IMR-90 (cell line): ENCODE measurements at regions of chr14 and their contacts with region 1.

Region 1: DNA sequence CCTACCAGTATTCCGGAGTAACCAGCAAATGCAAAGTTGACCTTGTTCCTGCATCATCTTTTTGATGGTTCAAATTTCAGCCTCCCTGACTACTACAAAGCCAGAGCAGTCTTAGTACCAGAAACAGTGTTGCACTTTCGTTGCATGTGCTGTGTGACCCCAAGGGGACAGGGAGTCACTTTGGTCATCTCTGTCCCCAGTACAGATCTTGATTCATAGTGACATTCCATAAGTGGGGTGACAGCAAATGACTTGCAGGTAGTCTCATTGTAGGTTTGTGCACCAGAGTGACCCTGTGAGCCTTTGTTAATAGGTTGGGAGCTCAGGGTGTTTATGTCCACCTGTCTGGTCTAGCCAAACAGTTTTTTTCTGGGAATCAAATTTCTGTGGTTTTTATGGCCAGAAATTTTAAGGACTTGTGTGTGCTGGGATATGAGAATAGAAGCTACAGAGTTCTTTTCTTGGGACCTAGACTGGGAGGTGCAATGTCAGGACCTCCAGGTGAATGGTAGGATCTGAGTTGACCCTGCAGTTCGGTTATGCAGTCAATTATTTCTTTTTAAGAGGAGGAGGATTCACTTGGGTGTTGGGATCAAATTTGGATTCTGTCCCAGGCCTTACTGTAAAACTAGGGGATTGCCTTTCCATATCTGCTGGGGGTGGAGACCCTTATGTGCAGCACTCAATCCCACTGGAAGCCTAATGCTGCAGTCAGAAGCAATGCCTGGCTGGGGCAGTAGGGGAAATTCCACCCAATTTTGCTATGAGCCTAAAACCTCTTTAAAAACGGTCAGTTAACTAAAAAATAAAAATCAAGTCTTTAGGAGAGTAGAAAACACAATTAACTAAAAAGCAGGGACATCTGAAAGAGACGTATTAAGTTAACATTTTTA is 10.1 kb downstream of the EIF5 start:
- DNase-seq: no peak
- ATAC-seq: no peak
- H3K4me3 ChIP-seq: no peak overlapping the region
- H3K27ac ChIP-seq: no peak overlapping the region
- H3K4me1 ChIP-seq: no peaks in the 10 kb centered on the region; the same call in 1 of the 2 replicates
- H3K27me3 ChIP-seq: no peaks in the 10 kb centered on the region
- CTCF ChIP-seq: no peak
- POLR2A ChIP-seq: no peak
- RAD21 ChIP-seq: no peak

Region 2: DNA sequence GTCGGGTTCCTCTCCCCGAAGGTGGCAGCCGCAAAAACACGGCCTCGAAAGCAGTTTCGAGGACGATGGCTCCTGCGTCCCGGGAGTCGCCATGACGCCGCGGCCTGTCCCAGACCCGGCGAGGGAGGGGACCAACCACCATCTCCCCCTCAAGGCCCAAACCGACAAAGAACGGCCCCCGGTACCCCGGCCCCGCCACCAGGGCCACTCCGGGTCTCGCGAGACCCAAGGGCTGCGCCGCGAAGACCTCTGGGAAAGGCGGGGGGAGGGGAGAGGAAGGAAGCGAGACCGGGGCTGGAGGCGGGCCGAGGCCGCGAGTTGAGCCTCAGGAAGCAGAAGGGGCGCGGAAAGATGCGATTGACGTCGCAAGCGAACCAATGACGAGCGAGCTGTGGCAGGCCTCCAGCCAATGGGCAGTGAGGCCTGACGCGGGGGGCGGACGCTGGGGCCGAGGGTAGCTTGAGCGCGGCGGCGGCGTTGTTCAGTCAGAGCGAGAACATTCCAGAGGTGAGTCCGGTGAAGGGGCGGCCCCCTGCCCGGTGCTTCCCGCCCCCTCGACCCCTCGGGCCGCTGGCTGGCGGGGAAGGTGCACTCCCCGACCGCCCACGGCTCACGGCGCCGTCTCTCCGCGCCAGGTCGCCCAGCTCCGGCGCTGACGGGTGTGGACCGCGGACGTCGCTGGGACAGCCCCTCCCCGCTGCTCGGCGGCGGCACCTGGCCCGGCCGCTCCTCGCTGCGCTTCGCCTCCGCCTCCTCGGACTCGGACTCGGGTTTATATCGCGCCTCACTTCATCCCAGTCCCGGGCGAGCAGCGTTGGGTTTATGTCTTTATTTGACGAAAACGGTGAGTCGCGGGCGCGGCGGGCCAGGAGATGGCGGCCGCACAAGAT is 10.2 kb before region 1 on chr14 and contains the start of gene EIF5:
- CTCF ChIA-PET with region 1: no interaction called
- POLR2A ChIA-PET with region 1: interaction called, 10 read pairs
- dilution Hi-C with region 1: no loop called
- in situ Hi-C with region 1: no loop called
- intact Hi-C with region 1: no loop called
- DNase-seq: peak; percentile 98
- ATAC-seq: peak; percentile 89
- H3K4me3 ChIP-seq: peak within 1 kb of the TSS; percentile 83
- H3K27ac ChIP-seq: peak within 1 kb of the TSS; percentile 97
- H3K4me1 ChIP-seq: peaks cover 3% of the 10 kb centered on the region
- H3K27me3 ChIP-seq: no peaks in the 10 kb centered on the region
- CTCF ChIP-seq: peak; percentile 8; the same call in 1 of the 2 replicates
- POLR2A ChIP-seq: peak; percentile 99
- RAD21 ChIP-seq: no peak
- total RNA-seq, gene EIF5: 163 and 241 TPM in 2 replicates

Region 3: DNA sequence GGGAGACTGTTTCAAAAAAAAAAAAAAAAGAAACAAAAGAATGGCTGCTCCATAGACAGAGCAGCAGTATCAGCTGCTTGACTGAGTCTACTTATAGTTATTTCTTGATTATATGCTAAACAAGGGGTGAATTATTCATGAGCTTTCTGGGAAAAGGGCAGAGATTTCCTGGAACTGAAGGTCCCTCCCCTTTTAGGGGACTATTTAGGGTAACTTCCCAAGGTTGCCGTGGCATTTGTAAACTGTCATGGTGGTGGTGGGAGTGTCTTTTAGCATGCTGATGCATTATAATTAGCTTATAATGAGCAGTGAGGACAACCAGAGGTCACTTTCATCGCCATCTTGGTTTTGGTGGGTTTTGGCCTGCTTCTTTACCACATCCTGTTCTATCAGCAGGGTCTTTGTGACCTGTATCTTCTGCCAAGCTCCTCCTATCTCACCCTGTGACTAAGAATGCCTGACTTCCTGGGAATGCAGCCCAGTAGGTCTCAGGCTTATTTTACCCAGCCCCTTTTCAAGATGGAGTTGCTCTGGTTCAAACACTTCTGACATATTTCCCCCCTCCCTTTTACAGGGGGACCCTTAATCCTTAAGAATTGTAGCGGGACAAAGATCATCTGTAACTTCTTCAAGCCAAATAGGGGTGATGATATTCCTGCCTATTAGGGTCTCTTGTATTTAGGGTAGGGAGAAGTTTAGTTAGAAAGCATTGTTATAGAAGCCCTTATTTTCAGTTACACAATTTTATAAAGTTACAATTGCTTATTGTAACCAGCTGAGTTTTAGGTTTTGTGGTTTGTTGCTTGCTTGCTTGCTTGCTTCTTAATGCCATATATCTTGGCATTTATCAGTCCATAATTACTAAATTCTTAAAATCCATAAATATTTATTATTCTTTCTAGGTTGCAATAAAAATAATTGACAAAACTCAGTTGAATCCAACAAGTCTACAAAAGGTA is 83.6 kb after region 1 on chr14:
- CTCF ChIA-PET with region 1: no interaction called
- POLR2A ChIA-PET with region 1: no interaction called
- dilution Hi-C with region 1: no loop called
- in situ Hi-C with region 1: no loop called
- intact Hi-C with region 1: no loop called
- DNase-seq: peak; percentile 85
- ATAC-seq: peak; percentile 52; the same call in 1 of the 2 replicates
- H3K4me3 ChIP-seq: no peak overlapping the region
- H3K27ac ChIP-seq: peak overlapping the region; percentile 29; the same call in 1 of the 2 replicates
- H3K4me1 ChIP-seq: peaks cover 17% of the 10 kb centered on the region
- H3K27me3 ChIP-seq: no peaks in the 10 kb centered on the region
- CTCF ChIP-seq: no peak
- POLR2A ChIP-seq: no peak
- RAD21 ChIP-seq: no peak